RWPE1 (cell line): ENCODE measurements at regions of chr16 and their contacts with region 1.

Region 1: GRCh38 chr16:592518-593306 is 2.8 kb downstream of the RAB40C start:
- DNase-seq: peak; percentile 87
- H3K27ac ChIP-seq: peak overlapping the region; percentile 95
- CTCF ChIP-seq: peak; percentile 90

Region 2: DNA sequence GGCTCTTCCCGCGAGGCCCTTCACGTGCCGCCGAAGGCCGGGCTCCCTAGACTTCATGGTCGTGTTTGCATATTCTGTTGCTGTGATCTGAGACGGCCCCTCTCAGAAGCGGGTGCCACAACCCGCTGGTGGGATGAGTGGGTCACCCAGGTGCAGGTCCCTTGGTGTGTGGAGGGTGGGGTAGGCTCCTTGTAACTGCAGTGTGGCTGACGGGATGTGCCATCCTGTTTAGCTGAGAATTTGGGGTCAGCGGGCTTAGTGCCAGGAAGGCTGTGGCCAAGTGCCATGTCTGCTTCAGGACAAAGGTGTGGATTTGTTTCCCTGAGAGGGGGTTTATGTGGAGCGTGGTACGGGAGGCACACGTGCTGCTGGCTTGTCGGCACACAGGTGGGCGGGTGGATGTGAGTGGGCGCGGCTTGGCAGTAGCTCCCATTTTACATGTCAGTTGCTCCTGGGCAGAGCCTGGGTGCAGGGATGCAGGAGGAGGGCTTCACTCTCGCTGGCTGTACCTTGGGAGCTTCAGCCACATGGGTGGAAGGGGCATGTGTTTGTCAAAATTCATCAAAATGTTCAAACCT is 28.9 kb after region 1 on chr16:
- CTCF ChIA-PET with region 1: interaction called, 17 read pairs
- POLR2A ChIA-PET with region 1: no interaction called
- DNase-seq: no peak
- H3K27ac ChIP-seq: peak overlapping the region; percentile 97
- CTCF ChIP-seq: no peak

Region 3: GRCh38 chr16:636206-637080 is 43.7 kb after region 1 on chr16 and contains the start of gene METTL26:
- CTCF ChIA-PET with region 1: interaction called, 11 read pairs
- POLR2A ChIA-PET with region 1: interaction called, 4 read pairs
- DNase-seq: peak; percentile 88
- H3K27ac ChIP-seq: peak within 1 kb of the TSS; percentile 93
- CTCF ChIP-seq: no peak

Region 4: DNA sequence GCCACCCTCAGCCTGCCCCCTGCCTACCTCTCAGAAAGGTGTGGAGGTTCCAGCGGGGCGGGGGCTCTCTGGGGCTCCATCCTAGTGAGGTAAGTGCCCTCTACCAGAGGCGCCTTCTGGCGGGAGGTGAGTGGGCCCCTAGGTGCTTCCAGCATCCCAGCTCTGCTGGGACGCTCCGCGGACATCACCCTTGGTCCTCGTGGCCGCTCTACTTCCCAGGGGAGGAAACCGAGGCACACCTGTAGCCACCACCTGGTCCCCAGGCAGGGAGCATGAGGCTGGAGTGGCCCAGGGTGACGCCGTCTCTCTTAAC is 50.3 kb after region 1 on chr16:
- CTCF ChIA-PET with region 1: interaction called, 13 read pairs
- POLR2A ChIA-PET with region 1: no interaction called
- DNase-seq: no peak
- H3K27ac ChIP-seq: peak overlapping the region; percentile 89
- CTCF ChIP-seq: no peak